Adrenal gland (tissue), 19 donors: ENCODE measurements at regions of chr9 and their contacts with region 1.

Region 1: DNA sequence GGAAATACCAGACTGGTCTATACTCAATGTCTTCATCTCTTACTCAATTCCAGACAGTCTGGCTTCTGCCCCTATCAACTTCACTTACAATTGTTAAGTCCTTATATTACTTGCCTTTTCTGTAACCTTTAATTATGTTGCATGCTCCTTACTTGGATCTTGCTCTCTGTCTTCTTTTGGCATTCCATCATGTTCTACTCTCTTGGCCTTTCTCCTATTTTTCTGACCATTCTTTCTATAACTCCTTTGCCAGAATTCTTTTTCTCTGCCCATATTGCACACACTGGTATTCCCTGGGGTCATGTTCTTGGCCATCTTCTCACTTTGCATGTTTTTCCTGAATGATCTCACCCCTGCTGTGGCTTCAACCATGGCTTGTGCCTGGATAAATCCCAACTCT is 209.8 kb upstream of the ZNF462 start:
- DNase-seq: no peak
- H3K4me3 ChIP-seq: no peak overlapping the region
- H3K27ac ChIP-seq: no peak overlapping the region
- H3K4me1 ChIP-seq: no peaks in the 10 kb centered on the region
- H3K27me3 ChIP-seq: no peaks in the 10 kb centered on the region
- CTCF ChIP-seq: no peak
- POLR2A ChIP-seq: no peak

Region 2: GRCh38 chr9:106697750-106698502 is 44.7 kb after region 1 on chr9:
- intact Hi-C with region 1: no loop called
- DNase-seq: peak; percentile 81 to 94 (median 87)
- H3K4me3 ChIP-seq: peak overlapping the region in 1 of 4 donors; percentile 41
- H3K27ac ChIP-seq: peak overlapping the region; percentile 24 to 83 (median 69)
- H3K4me1 ChIP-seq: peaks cover 0 to 8% of the 10 kb centered on the region in 2 donors
- H3K27me3 ChIP-seq: no peaks in the 10 kb centered on the region
- CTCF ChIP-seq: no peak
- POLR2A ChIP-seq: peak in 1 of 2 donors; percentile 48

Region 3: GRCh38 chr9:106717686-106718085 is 64.5 kb after region 1 on chr9:
- intact Hi-C with region 1: no loop called
- DNase-seq: peak in 6 of 7 donors; percentile 15 to 60 (median 29)
- H3K4me3 ChIP-seq: no peak overlapping the region
- H3K27ac ChIP-seq: no peak overlapping the region
- H3K4me1 ChIP-seq: peaks cover 0 to 8% of the 10 kb centered on the region in 2 donors
- H3K27me3 ChIP-seq: no peaks in the 10 kb centered on the region
- CTCF ChIP-seq: peak in 4 of 6 experiments; percentile 17 to 31 (median 23)
- POLR2A ChIP-seq: no peak

Region 4: DNA sequence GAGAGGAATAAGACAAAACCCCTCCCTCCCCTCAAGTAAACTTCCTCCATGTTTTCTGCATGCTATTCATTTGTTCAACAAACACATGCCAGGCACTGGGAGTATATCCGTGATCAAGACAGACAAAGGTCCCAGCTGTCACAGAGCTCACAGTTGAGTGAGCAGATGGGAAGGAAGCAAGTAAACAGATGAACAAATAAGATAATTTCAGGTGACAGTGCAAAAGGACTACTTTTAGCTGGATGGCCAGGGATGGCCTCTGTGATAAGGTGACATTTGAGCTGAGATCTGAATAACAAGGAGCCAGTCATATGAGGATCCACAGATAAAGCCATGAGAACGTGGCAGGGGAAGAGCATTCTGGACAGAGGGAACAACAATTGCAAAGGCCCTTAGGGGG is 508.1 kb after region 1 on chr9:
- intact Hi-C with region 1: loop called in 1 of 2 experiments (anchors 10 kb)
- DNase-seq: no peak
- H3K4me3 ChIP-seq: no peak overlapping the region
- H3K27ac ChIP-seq: no peak overlapping the region
- H3K4me1 ChIP-seq: no peaks in the 10 kb centered on the region
- H3K27me3 ChIP-seq: no peaks in the 10 kb centered on the region
- CTCF ChIP-seq: no peak
- POLR2A ChIP-seq: no peak